Aorta (tissue), 5 donors: ENCODE measurements at regions of chr2 and their contacts with region 1.

Region 1: GRCh38 chr2:201696151-201696659 is 2.2 kb downstream of the MPP4 start:
- DNase-seq: no peak
- ATAC-seq: no peak
- H3K4me3 ChIP-seq: no peak overlapping the region
- H3K27ac ChIP-seq: no peak overlapping the region
- H3K4me1 ChIP-seq: peaks cover 0 to 1% of the 10 kb centered on the region in 2 donors
- H3K27me3 ChIP-seq: no peaks in the 10 kb centered on the region

Region 2: DNA sequence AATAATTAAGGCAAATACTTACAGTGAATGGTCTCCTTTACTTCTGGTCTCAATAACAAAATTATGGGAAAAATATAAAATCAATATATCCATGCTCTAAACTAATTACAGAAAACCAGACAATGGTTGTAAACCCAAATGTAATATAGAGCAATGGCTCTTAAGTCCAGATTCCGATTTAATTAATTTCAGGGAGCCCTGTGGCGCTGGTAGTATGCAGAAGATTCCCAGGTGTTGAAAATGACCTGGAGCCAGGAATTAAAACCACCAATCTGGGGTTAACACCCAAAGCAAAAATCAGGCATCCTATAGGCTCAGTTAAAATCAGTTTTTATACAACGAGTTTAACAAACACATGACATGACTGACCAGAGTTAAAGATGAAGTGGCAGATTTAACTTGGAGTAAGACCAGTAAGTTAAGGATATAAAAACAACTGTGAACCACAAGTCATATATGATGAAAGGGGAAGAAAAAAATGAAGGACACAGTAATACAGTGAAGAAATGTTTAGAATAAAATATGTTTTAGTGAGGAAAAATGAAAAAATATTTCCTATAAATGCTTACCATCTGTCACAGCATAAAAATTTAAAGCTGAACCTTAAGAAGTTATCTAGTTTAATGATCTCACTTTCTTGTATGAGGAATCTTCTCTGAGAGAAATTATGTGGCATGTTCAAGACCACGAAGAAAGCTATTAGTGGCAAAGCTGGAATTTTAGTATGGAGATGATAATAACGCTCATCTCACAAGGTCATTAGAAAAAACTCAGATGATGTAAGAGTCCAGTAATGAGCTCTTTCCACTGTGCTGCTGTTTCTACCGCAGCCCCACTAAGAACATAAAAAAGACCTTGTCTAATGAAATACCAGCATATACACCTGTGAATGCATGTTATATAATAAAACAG is 293.3 kb before region 1 on chr2:
- intact Hi-C with region 1: no loop called
- DNase-seq: no peak
- ATAC-seq: no peak
- H3K4me3 ChIP-seq: no peak overlapping the region
- H3K27ac ChIP-seq: no peak overlapping the region
- H3K4me1 ChIP-seq: peaks cover 2 to 6% of the 10 kb centered on the region in 2 donors
- H3K27me3 ChIP-seq: no peaks in the 10 kb centered on the region

Region 3: DNA sequence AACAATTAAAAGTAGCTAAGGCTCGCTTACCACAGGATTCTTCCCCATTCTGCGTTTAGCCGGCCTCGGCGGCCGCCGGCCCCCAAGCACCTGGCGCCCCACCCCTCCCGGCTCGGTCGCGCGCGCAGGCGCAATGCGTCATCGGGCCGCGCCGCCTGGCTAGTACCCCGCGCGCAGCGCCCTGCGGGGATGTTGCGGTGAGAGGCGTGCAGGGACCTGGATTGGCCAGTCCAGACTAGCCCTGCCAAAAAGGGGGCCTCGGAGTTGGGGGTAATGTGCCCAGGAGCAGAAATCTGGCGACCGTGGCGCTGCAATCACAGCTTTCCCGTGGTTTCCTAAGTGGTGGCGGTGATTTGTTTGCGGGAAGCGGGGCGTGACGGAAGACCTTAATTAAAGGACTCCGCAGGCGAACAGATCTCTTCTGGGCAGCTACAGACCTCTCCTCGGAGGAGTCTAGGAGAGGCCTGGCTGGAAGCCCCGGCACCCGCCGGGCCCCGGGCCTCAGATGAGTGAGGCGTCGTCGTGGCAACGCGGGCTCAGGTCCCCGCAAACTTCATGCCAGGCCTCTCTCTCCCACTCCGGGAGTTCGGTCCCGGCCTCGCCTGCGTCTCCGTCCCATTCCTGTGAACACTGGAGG is 53.5 kb before region 1 on chr2:
- intact Hi-C with region 1: loop called in 1 of 2 experiments (anchors 5 kb)
- DNase-seq: peak; percentile 88 to 94
- ATAC-seq: peak; percentile 95
- H3K4me3 ChIP-seq: peak overlapping the region; percentile 60 to 70
- H3K27ac ChIP-seq: peak overlapping the region; percentile 89 to 98
- H3K4me1 ChIP-seq: no peaks in the 10 kb centered on the region
- H3K27me3 ChIP-seq: no peaks in the 10 kb centered on the region

Region 4: DNA sequence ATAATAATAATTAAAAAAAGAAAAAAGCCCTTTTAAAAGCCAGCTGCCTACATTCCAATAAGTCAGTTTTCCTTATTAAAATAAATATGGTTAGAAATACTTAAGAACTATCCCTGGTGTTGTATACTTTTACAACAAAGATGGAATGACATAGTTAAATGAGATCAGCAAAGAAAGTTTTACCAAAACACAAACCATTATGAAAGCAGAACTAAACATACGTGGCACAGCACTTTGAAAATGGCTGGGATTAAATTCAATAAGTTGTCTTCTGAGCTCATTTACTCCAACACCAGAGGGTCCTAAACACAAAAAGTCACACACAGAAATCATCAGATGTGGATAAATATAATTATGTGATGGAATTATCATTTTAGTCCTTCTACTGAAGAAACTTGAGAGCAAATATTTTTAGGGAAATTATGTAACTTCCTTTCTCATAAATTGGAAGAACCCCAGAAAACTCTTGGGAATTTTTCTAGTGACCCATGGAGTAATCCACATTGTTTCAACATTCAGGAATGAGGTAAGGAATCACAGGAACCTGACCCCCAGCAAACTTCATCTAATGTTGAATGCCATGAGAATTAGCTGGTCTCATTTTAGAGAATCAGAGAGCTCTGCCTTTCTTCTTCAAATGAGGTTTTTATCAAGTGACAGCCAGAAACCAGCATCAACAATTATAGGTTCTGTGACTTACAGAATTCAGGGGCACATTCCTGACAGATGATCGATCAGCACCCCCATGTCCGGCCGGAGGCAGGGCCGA is 41.4 kb before region 1 on chr2:
- intact Hi-C with region 1: loop called in 1 of 2 experiments (anchors 5 kb)
- DNase-seq: no peak
- ATAC-seq: no peak
- H3K4me3 ChIP-seq: no peak overlapping the region
- H3K27ac ChIP-seq: peak overlapping the region in 1 of 2 donors; percentile 51
- H3K4me1 ChIP-seq: no peaks in the 10 kb centered on the region
- H3K27me3 ChIP-seq: no peaks in the 10 kb centered on the region

Region 5: GRCh38 chr2:201933792-201934237 is 237.6 kb after region 1 on chr2:
- intact Hi-C with region 1: no loop called
- DNase-seq: no peak
- ATAC-seq: no peak
- H3K4me3 ChIP-seq: no peak overlapping the region
- H3K27ac ChIP-seq: no peak overlapping the region
- H3K4me1 ChIP-seq: no peaks in the 10 kb centered on the region
- H3K27me3 ChIP-seq: no peaks in the 10 kb centered on the region

Region 6: DNA sequence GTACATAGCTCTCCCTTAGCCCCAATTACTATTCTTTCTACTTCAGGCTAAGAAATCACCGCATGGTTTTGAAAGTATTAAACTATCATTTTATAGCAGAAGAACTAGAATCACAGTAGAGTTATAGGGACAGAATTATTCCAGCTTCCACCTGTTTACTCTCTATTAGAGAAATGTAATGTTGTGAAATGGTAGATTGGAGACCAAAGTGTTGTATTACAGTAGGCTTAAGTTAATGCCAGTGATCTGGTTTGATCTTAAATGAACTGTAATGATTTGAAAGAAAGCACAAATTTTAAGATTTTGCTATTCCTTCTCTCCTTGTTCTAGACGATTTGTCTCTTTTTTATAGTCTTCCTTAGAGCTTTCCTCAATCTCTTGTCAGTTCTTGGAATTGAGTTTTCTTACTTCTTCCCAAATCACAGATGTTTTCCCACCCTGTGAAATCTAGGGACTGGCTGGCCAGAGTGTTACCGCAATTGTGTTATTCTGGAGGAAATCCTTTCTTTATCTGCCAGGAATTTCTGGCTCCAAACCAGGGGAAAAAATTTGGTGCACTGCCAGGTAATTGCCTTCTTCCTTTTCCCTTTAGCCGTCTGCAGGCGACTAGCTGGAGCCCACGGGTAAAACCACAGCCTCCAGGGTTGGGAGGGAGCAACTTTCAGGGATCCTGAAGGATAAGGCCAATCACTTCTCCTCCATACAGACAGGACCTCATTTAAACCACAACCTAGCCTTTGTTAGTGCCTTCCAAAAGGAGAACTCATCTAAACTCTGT is 621.1 kb after region 1 on chr2:
- intact Hi-C with region 1: no loop called
- DNase-seq: peak in 1 of 2 donors; percentile 72
- ATAC-seq: peak; percentile 79
- H3K4me3 ChIP-seq: no peak overlapping the region
- H3K27ac ChIP-seq: no peak overlapping the region
- H3K4me1 ChIP-seq: no peaks in the 10 kb centered on the region
- H3K27me3 ChIP-seq: no peaks in the 10 kb centered on the region